ENCODE measurements at regions of chr12 and their contacts with region 1.

Region 1: DNA sequence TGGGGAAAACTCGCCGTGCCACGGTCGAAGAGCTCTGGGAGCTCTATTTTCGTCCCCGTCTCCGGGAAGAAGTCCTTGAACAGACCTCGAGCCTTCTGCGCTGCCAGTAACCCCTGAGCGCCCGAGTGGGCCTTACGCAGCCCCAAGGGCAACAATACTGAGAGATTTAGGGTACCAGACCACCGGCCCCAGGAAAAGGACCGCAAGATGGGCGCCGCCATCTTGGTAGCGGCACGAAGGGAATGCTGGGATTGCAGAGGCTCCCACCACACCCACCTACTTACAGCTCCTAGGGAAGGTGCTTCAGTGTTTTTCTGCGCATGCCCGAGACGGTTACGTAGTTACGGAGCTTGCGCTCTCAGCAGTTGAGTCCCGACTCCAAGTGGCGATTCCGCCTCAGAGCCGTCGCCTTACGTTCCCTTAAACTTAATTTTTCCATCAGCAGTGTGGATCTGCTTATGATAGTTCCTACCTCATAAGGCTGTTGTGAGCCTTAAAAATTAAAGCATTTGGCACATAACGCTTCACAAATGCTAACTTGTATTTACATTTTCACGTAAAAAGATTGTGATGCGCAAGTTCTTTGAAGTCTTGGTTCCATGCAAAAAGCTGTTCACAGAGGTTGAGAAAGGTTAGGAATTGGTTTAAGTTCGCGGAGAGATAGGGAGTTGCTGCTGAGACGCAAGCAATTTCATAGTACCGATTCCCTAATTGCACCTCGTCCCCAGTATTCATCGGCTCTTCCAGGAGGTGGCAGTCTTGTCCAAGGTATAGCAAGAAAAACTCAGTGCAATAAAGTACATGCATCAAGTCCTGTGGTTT is at the start of gene YARS2:
- DNase-seq: peak; percentile 79 to 99
- ATAC-seq: peak; percentile 92 to 98
- H3K4me3 ChIP-seq: peak within 1 kb of the TSS; percentile 70
- H3K27ac ChIP-seq: peak within 1 kb of the TSS; percentile 96
- H3K4me1 ChIP-seq: peaks cover 13% of the 10 kb centered on the region
- CTCF ChIP-seq: peak; percentile 98
- EP300 ChIP-seq: no peak
- POLR2A ChIP-seq: peak; percentile 95
- RAD21 ChIP-seq: peak; percentile 97 to 99
- polyA plus RNA-seq, gene YARS2: 39.2 and 43.2 TPM in 2 replicates

Region 2: DNA sequence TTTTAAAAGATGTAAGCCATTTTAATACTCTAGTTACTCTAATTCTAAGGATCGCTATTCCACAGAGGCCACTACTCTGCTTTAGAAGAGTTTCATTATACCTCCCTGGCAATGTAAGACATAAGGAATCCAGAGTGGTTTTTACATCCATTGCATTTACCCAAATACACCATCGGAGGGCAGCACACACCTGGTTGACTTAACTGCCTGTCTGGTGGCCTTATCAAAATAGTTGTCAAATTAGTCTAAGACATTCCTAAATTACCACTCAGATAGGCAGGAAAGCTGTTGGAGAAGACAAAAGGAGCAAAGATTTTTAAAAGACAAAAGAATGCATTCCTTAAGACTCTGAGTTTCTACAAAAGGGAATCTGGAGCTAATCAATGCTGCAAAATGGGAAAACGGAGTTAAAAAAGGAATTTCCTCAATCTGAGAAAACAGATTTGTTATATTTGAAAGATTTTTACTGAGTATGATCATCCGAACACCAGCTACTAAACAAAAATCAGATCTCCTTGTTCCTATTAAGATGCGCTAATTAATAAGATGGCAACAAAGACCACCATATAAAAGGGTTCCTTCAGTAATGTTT is 390.3 kb before region 1 on chr12:
- CTCF ChIA-PET with region 1: interaction called, 13 read pairs
- POLR2A ChIA-PET with region 1: no interaction called
- DNase-seq: peak; percentile 49 to 81
- ATAC-seq: peak; percentile 76 to 85; a peak in 5 of 6 replicates
- H3K4me3 ChIP-seq: no peak overlapping the region
- H3K27ac ChIP-seq: no peak overlapping the region; a peak in 1 of 6 replicates
- H3K4me1 ChIP-seq: peaks cover 15% of the 10 kb centered on the region; the same call in 2 of the 3 replicates
- CTCF ChIP-seq: peak; percentile 91
- EP300 ChIP-seq: no peak
- POLR2A ChIP-seq: no peak
- RAD21 ChIP-seq: peak; percentile 94 to 96

Region 3: DNA sequence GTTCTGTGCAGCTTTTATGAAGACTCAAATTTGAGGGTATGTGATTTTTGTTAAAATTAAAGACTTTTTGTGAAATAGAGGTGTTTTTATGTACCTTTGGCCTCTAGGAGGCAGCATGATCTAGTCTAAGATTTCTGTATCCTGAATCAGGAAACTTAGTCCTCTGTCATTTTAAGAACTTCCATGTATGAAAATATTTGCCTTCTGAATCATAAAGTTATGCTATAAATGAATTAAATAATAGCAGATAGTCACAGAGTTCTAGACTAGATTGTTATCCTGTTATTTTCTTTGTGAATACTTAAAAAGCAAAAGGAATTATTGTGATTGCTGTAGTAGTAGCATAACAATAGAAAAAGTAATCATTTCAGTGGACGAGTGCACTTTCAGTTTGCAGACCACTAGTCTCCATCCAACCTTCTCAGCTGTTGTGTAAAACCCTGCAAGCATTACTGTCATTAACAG is 300.2 kb before region 1 on chr12:
- CTCF ChIA-PET with region 1: interaction called, 27 read pairs
- POLR2A ChIA-PET with region 1: interaction called, 12 read pairs
- DNase-seq: peak; percentile 66 to 81
- ATAC-seq: peak; percentile 73 to 74
- H3K4me3 ChIP-seq: peak overlapping the region; percentile 28; the same call in 2 of the 3 replicates
- H3K27ac ChIP-seq: peak overlapping the region; percentile 69 to 82; a peak in 4 of 6 replicates
- H3K4me1 ChIP-seq: peaks cover 60% of the 10 kb centered on the region
- CTCF ChIP-seq: peak; percentile 89
- EP300 ChIP-seq: no peak
- POLR2A ChIP-seq: no peak
- RAD21 ChIP-seq: peak; percentile 91 to 92

Region 4: DNA sequence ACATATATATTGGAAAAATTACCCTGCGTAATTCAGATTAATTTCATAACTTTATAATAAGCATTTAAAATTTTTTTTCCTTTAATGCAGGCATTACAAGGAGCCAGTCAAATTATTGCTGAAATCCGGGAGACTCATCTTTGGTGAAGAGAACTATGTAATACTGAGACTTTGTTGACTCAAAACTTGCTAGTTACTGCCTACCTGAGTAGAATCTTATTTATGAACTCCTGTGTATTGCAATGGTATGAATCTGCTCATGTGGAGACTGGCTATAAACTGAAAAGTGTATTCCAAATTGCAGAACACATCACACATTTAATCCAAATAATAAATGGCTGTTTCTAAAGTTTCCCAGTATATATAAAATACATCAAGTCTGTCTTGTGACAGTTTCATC is 12.6 kb before region 1 on chr12:
- CTCF ChIA-PET with region 1: interaction called, 21 read pairs
- POLR2A ChIA-PET with region 1: interaction called, 8 read pairs
- DNase-seq: no peak
- ATAC-seq: no peak
- H3K4me3 ChIP-seq: no peak overlapping the region
- H3K27ac ChIP-seq: no peak overlapping the region
- H3K4me1 ChIP-seq: no peaks in the 10 kb centered on the region
- CTCF ChIP-seq: no peak
- EP300 ChIP-seq: no peak
- POLR2A ChIP-seq: no peak
- RAD21 ChIP-seq: no peak

Region 5: GRCh38 chr12:32780071-32780470 is 24.2 kb after region 1 on chr12:
- CTCF ChIA-PET with region 1: interaction called, 12 read pairs
- POLR2A ChIA-PET with region 1: no interaction called
- DNase-seq: no peak
- ATAC-seq: no peak
- H3K4me3 ChIP-seq: no peak overlapping the region
- H3K27ac ChIP-seq: no peak overlapping the region
- H3K4me1 ChIP-seq: no peaks in the 10 kb centered on the region
- CTCF ChIP-seq: no peak
- EP300 ChIP-seq: no peak
- POLR2A ChIP-seq: no peak
- RAD21 ChIP-seq: no peak

Region 6: DNA sequence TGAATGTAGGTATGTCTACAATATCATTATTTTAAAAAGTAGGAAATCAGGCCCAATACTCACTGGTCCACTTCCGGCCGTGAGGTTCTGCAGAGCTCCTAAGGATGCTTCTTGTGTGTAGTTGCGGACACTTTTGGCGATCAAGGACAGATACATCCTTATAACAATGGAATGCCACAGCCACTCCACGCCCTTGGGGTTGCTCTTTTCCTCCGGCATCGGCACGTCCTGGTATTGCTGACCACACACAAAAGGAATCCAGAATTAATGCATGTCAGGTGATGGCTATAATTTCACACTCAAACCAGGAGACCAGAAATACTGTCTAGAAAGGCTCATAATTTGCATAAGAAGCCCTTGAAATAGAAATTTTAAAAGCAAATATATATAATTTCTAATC is 65.4 kb after region 1 on chr12:
- CTCF ChIA-PET with region 1: no interaction called
- POLR2A ChIA-PET with region 1: no interaction called
- DNase-seq: no peak
- ATAC-seq: no peak
- H3K4me3 ChIP-seq: no peak overlapping the region
- H3K27ac ChIP-seq: no peak overlapping the region
- H3K4me1 ChIP-seq: no peaks in the 10 kb centered on the region
- CTCF ChIP-seq: no peak
- EP300 ChIP-seq: no peak
- POLR2A ChIP-seq: no peak
- RAD21 ChIP-seq: no peak

Region 7: GRCh38 chr12:32918890-32919801 is 163.3 kb after region 1 on chr12:
- CTCF ChIA-PET with region 1: interaction called, 35 read pairs
- POLR2A ChIA-PET with region 1: interaction called, 5 read pairs
- DNase-seq: peak in 1 of 2 experiments; percentile 45
- ATAC-seq: peak; percentile 56 to 65; a peak in 4 of 6 replicates
- H3K4me3 ChIP-seq: no peak overlapping the region
- H3K27ac ChIP-seq: peak overlapping the region; percentile 67 to 73; a peak in 3 of 6 replicates
- H3K4me1 ChIP-seq: peaks cover 33% of the 10 kb centered on the region
- CTCF ChIP-seq: peak; percentile 74
- EP300 ChIP-seq: no peak
- POLR2A ChIP-seq: no peak
- RAD21 ChIP-seq: peak; percentile 71 to 74

Region 8: GRCh38 chr12:34022079-34022830 is 1266.4 kb after region 1 on chr12 and contains the start of gene ALG10:
- CTCF ChIA-PET with region 1: interaction called, 78 read pairs
- POLR2A ChIA-PET with region 1: interaction called, 38 read pairs
- DNase-seq: peak; percentile 63 to 98
- ATAC-seq: peak; percentile 100
- H3K4me3 ChIP-seq: peak within 1 kb of the TSS; percentile 79
- H3K27ac ChIP-seq: peak within 1 kb of the TSS; percentile 79 to 92
- H3K4me1 ChIP-seq: peaks cover 8% of the 10 kb centered on the region; the same call in 2 of the 3 replicates
- CTCF ChIP-seq: peak; percentile 85
- EP300 ChIP-seq: no peak
- POLR2A ChIP-seq: peak; percentile 53
- RAD21 ChIP-seq: peak; percentile 84 to 89
- polyA plus RNA-seq, gene ALG10: 13.9 and 16.4 TPM in 2 replicates